Activated T-helper 2 cell treated with anti-CD3 and anti-CD28 coated beads, Interferon-gamma antibody, Interleukin-2, Interleukin-4, amounts not matched to agents 10 μg/mL and 5 μg/mL and 100 μg/mL, durations not matched to agents 14 hours and 24 hours and 36 hours (primary cell): ENCODE measurements at regions of chr4 and their contacts with region 1.

Region 1: GRCh38 chr4:145618932-145619638 is at the start of gene MMAA:
- DNase-seq: peak; percentile 93
- H3K4me3 Mint-ChIP-seq: peak within 1 kb of the TSS; percentile 94
- H3K27ac Mint-ChIP-seq: peak within 1 kb of the TSS; percentile 99
- H3K4me1 Mint-ChIP-seq: peaks cover 49% of the 10 kb centered on the region
- H3K27me3 Mint-ChIP-seq: no peaks in the 10 kb centered on the region
- total RNA-seq, gene MMAA: 15.9 and 16.0 TPM in 2 replicates

Region 2: GRCh38 chr4:145097821-145098674 is 521.0 kb before region 1 on chr4 and contains the starts of genes ABCE1 and ANAPC10:
- intact Hi-C with region 1: loop called (anchors 2 kb)
- DNase-seq: peak; percentile 93
- H3K4me3 Mint-ChIP-seq: peak within 1 kb of the TSS; percentile 95
- H3K27ac Mint-ChIP-seq: peak within 1 kb of the TSS; percentile 99
- H3K4me1 Mint-ChIP-seq: peaks cover 25% of the 10 kb centered on the region
- H3K27me3 Mint-ChIP-seq: no peaks in the 10 kb centered on the region
- total RNA-seq, gene ABCE1: 162 and 173 TPM in 2 replicates
- total RNA-seq, gene ANAPC10: 28.0 and 29.4 TPM in 2 replicates

Region 3: DNA sequence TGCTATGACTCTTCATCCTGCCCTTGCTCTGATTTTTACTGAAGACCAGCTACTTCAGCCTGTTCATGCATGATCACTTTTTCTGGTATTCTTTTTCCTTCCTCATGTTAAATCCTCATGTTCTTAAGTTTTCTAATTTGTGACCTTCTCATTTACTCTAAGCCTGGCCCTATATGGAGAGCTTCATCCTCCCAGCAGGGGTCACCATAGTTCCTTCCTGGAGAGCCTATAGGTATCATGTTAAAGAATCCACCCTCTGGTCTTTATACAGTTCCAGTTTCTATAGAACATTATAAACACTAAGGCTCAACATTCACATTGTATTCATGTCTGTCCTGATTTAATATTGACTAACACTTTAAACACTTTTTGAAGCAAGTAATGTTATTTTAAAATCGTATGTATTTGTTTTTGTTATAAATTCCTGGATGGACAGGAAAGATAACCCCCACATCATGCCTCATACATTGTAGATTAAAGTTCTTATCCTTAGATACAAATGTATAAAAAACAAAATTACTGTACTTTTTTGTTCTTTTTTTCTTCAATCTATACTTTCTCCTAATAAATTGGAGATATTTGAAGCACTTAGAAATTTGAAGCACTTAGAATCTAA is 384.9 kb before region 1 on chr4:
- intact Hi-C with region 1: loop called (anchors 2 kb)
- DNase-seq: peak; percentile 14
- H3K4me3 Mint-ChIP-seq: no peak overlapping the region
- H3K27ac Mint-ChIP-seq: no peak overlapping the region
- H3K4me1 Mint-ChIP-seq: no peaks in the 10 kb centered on the region
- H3K27me3 Mint-ChIP-seq: peaks cover 17% of the 10 kb centered on the region

Region 4: DNA sequence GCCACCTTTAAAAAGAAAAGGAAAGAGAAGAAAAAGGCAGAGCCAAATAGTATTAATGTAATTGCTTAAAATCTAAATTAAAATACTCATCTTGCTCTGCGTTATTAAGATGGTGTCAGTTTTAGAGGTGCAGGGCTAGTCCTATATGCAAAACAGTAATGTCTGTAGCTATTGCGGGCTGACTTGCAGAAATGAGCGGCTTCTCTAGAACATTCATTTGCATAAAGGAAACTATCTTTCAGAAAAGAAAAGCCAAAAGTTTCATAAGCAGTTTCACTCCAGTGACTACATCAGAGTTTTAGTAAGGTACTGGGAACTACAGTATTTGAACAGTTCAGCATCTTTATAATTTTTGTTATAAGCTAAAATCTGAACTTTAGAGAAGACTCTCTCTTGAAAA is 131.5 kb before region 1 on chr4:
- intact Hi-C with region 1: loop called (anchors 1 kb)
- DNase-seq: no peak
- H3K4me3 Mint-ChIP-seq: peak overlapping the region; percentile 20
- H3K27ac Mint-ChIP-seq: peak overlapping the region; percentile 29
- H3K4me1 Mint-ChIP-seq: peaks cover 17% of the 10 kb centered on the region
- H3K27me3 Mint-ChIP-seq: peaks cover 13% of the 10 kb centered on the region

Region 5: GRCh38 chr4:145829629-145830395 is 210.7 kb after region 1 on chr4:
- intact Hi-C with region 1: loop called (anchors 1 kb)
- DNase-seq: peak; percentile 13
- H3K4me3 Mint-ChIP-seq: peak overlapping the region; percentile 62
- H3K27ac Mint-ChIP-seq: peak overlapping the region; percentile 84
- H3K4me1 Mint-ChIP-seq: peaks cover 46% of the 10 kb centered on the region
- H3K27me3 Mint-ChIP-seq: no peaks in the 10 kb centered on the region

Region 6: DNA sequence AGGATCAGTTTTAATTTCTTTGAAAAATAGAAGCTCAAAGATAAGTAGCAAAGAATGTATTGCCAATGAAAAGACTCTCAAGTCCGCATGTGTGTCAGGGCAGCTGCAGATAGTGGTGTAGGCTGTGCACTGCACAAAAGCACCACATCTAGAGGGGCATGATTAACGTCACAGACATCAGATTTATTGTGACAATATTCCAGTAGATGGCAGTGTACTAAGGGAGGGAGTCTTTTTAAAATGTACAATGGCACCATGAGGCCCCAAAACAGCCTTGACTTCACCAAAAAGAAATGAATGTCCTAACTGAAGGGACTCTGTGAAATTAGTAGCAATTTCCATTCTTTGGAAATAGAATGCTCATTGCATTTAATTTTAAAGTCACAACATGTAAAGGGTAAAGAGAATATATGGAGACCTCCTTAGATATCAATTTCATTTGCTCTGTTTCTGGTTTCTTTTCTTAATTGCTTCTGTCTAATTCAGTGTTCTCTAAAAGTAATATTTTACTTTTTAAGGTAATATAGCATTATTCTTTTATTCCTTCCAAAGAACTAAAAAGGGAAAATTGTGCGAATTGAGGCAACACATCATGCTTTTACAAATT is 221.2 kb after region 1 on chr4:
- intact Hi-C with region 1: no loop called
- DNase-seq: no peak
- H3K4me3 Mint-ChIP-seq: no peak overlapping the region
- H3K27ac Mint-ChIP-seq: no peak overlapping the region
- H3K4me1 Mint-ChIP-seq: peaks cover 30% of the 10 kb centered on the region
- H3K27me3 Mint-ChIP-seq: no peaks in the 10 kb centered on the region

Region 7: GRCh38 chr4:146175541-146176453 is 556.7 kb after region 1 on chr4 and contains the start of gene LSM6:
- intact Hi-C with region 1: loop called (anchors 5 kb)
- DNase-seq: peak; percentile 78
- H3K4me3 Mint-ChIP-seq: peak within 1 kb of the TSS; percentile 86
- H3K27ac Mint-ChIP-seq: peak within 1 kb of the TSS; percentile 71
- H3K4me1 Mint-ChIP-seq: peaks cover 37% of the 10 kb centered on the region
- H3K27me3 Mint-ChIP-seq: no peaks in the 10 kb centered on the region
- total RNA-seq, gene LSM6: 67.2 and 74.1 TPM in 2 replicates